BJ (cell line): ENCODE measurements at regions of chr3 and their contacts with region 1.

Region 1: GRCh38 chr3:123028233-123028828 is 768 bp upstream of the SEMA5B start:
- DNase-seq: no peak
- H3K4me3 ChIP-seq: peak overlapping the region; percentile 34
- H3K27me3 ChIP-seq: peaks cover 69% of the 10 kb centered on the region
- CTCF ChIP-seq: peak; percentile 61

Region 2: GRCh38 chr3:123042413-123042812 is 14.1 kb after region 1 on chr3:
- CTCF ChIA-PET with region 1: interaction called, 33 read pairs
- POLR2A ChIA-PET with region 1: no interaction called
- DNase-seq: no peak
- H3K4me3 ChIP-seq: no peak overlapping the region
- H3K27me3 ChIP-seq: peaks cover 22% of the 10 kb centered on the region
- CTCF ChIP-seq: no peak